ENCODE measurements at regions of chr5 and their contacts with region 1.

Region 1: GRCh38 chr5:86909456-86910295 is 291.9 kb downstream of the COX7C start:
- DNase-seq: no peak
- H3K4me3 ChIP-seq: no peak overlapping the region
- H3K27ac ChIP-seq: no peak overlapping the region
- H3K4me1 ChIP-seq: no peaks in the 10 kb centered on the region
- H3K27me3 ChIP-seq: no peaks in the 10 kb centered on the region
- CTCF ChIP-seq: no peak

Region 2: DNA sequence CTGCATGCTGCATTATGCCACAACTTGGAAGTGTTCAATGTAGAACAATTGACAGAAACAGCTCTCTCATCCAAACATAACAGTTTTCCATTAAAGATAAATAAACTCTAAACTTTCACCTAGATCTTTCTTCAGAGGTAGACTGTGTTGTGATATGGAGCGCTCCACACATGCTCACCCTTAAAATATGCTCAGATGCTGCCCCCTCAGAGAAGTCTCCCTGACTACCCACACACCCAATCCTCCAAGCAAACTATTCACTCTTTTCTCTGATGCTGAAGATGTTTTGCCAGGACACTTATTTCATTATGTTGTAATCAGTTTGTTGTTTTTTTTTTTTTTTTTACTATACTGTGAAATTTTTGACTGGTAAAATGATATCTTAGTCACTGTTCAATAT is 151.4 kb after region 1 on chr5:
- CTCF ChIA-PET with region 1: no interaction called
- POLR2A ChIA-PET with region 1: interaction called, 15 read pairs
- intact Hi-C with region 1: no loop called
- DNase-seq: no peak
- H3K4me3 ChIP-seq: no peak overlapping the region
- H3K27ac ChIP-seq: no peak overlapping the region
- H3K4me1 ChIP-seq: no peaks in the 10 kb centered on the region
- H3K27me3 ChIP-seq: no peaks in the 10 kb centered on the region
- CTCF ChIP-seq: no peak